Activated CD4-positive, alpha-beta T cell treated with anti-CD3 and anti-CD28 coated beads, Interleukin-2, amount 10 ng/mL, durations not matched to agents 24 days and 14 days (primary cell): ENCODE measurements at regions of chr11 and their contacts with region 1.

Region 1: DNA sequence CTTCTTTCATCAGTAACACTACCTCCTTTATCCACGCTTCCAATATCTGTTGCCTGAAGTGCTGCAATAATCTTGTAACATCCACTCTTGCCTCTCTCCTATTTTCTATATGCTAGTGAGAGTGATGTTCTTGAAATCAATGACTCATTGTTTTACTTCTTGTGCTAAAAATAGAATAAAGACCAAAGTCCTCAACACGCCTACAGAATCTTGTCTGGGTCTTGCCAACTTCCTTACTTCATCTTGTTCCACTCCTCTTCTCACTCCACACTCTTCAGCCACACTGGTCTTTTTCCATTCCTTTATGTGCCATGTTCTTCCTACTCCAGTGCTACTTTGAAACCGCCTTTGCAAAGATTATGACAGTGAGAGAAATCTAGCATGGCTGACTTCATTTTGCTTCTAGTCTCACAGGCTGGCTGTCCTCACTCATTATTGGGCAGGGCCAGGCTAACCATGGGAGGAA is 136.4 kb downstream of the CCDC81 start:
- DNase-seq: no peak
- H3K4me3 Mint-ChIP-seq: no peak overlapping the region
- H3K27ac Mint-ChIP-seq: no peak overlapping the region
- H3K4me1 Mint-ChIP-seq: no peaks in the 10 kb centered on the region
- H3K27me3 Mint-ChIP-seq: peaks cover under 1% of the 10 kb centered on the region

Region 2: GRCh38 chr11:86523738-86524619 is 12.9 kb after region 1 on chr11:
- intact Hi-C with region 1: loop called (anchors 1 kb)
- DNase-seq: no peak
- H3K4me3 Mint-ChIP-seq: peak overlapping the region; percentile 35
- H3K27ac Mint-ChIP-seq: peak overlapping the region; percentile 88
- H3K4me1 Mint-ChIP-seq: peaks cover 28% of the 10 kb centered on the region
- H3K27me3 Mint-ChIP-seq: no peaks in the 10 kb centered on the region